Adrenal gland (tissue), 19 donors: ENCODE measurements at regions of chr4 and their contacts with region 1.

Region 1: GRCh38 chr4:74133786-74134499 is 24.0 kb upstream of the MTHFD2L start:
- DNase-seq: peak; percentile 80 to 94 (median 82)
- H3K4me3 ChIP-seq: no peak overlapping the region
- H3K27ac ChIP-seq: no peak overlapping the region
- H3K4me1 ChIP-seq: no peaks in the 10 kb centered on the region
- H3K27me3 ChIP-seq: no peaks in the 10 kb centered on the region
- CTCF ChIP-seq: peak; percentile 51 to 89 (median 87)
- POLR2A ChIP-seq: no peak

Region 2: DNA sequence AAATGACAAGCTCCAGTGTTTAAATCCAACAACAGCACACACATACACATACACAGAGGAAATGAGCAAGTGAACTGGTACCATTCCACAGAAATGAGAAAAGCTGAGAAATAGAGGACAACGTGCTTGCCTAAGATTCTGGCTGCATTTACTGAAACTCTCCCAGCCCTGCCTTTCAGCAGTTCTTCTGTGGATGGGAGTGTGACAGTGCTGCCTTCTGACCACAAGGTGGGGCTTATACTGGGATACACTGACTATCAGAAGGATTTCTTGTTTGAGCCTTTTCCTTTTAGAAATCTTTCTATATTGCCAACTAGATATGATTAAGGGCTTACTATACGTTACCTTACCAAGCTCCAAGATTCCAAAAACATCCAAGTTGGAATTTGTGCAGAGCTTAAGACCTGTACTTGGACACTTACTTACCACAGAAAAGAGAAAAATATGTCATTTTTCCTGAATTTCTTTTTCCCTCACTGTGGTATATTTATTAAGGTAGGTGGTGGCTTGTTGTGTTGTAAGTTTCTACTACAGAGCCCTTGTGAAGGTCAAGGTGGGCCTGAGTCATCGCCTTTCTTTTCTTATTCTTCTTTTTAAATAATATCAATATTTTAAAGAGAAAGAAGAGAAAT is 404.3 kb before region 1 on chr4:
- intact Hi-C with region 1: loop called in 1 of 2 experiments (anchors 10 kb)
- DNase-seq: peak; percentile 61 to 86 (median 74)
- H3K4me3 ChIP-seq: no peak overlapping the region
- H3K27ac ChIP-seq: no peak overlapping the region
- H3K4me1 ChIP-seq: peaks cover 0 to 50% of the 10 kb centered on the region in 2 donors
- H3K27me3 ChIP-seq: no peaks in the 10 kb centered on the region
- CTCF ChIP-seq: peak; percentile 76 to 85 (median 82)
- POLR2A ChIP-seq: no peak